ENCODE measurements at regions of chr4 and their contacts with region 1.

Region 1: DNA sequence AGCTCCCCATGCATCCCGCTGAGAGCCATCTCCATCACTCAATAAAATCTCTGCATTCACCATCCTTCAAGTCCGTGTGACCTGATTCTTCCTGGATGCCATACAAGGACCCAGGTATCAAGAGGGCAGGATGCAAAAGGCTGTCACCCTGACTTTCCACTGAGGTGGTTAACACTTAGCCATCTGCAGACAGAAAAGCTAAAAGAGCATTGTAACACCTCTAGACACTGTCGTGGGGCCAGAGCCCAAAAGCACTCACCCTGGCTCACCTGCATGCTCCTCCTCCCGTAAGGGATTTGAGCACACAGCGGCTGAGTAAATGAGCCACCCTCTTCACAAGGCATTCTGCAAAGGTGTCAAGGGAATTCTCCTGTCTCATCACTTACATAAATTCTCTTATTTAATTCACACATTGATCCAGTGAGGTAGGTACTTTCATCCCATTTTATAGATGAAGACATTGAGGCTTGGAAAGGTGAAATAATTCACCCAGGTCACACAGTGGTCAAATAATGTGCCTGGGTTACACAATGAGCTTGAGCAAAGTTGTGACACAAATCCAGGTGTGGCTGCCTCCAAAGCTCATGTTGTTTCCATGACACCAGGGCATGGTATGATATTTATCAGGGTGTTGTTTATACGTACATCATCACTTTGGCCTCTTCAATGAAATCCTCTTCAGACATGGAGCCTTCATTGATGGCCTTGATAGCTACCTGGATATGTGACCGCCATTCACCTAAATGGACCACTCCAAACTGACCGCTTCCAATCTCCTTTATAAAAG is 48.0 kb downstream of the TXK start:
- DNase-seq: no peak
- H3K4me3 ChIP-seq: no peak overlapping the region
- H3K4me3 Mint-ChIP-seq: no peak overlapping the region
- H3K27ac ChIP-seq: no peak overlapping the region
- H3K27ac Mint-ChIP-seq: peak overlapping the region in 2 of 7 donors; percentile 22 to 46
- H3K4me1 ChIP-seq: no peaks in the 10 kb centered on the region
- H3K4me1 Mint-ChIP-seq: peaks cover 5 to 19% (median 9%) of the 10 kb centered on the region in 4 donors
- H3K27me3 ChIP-seq: no peaks in the 10 kb centered on the region
- H3K27me3 Mint-ChIP-seq: no peaks in the 10 kb centered on the region

Region 2: GRCh38 chr4:47926639-47927258 is 159.3 kb before region 1 on chr4:
- CTCF ChIA-PET with region 1: interaction called, 5 read pairs
- POLR2A ChIA-PET with region 1: no interaction called
- intact Hi-C with region 1: loop called (anchors 1 kb)
- DNase-seq: peak in 4 of 5 donors; percentile 45 to 49 (median 47)
- H3K4me3 ChIP-seq: no peak overlapping the region
- H3K4me3 Mint-ChIP-seq: peak overlapping the region in 6 of 8 donors; percentile 15 to 69 (median 47)
- H3K27ac ChIP-seq: no peak overlapping the region
- H3K27ac Mint-ChIP-seq: no peak overlapping the region
- H3K4me1 ChIP-seq: peaks cover 7% of the 10 kb centered on the region
- H3K4me1 Mint-ChIP-seq: peaks cover 11 to 13% (median 12%) of the 10 kb centered on the region in 4 donors
- H3K27me3 ChIP-seq: no peaks in the 10 kb centered on the region
- H3K27me3 Mint-ChIP-seq: peaks cover 9 to 15% of the 10 kb centered on the region in 2 donors

Region 3: GRCh38 chr4:48008021-48008596 is 77.9 kb before region 1 on chr4:
- CTCF ChIA-PET with region 1: interaction called, 44 read pairs
- POLR2A ChIA-PET with region 1: no interaction called
- intact Hi-C with region 1: loop called (anchors 1 kb)
- DNase-seq: no peak
- H3K4me3 ChIP-seq: no peak overlapping the region
- H3K4me3 Mint-ChIP-seq: no peak overlapping the region
- H3K27ac ChIP-seq: no peak overlapping the region
- H3K27ac Mint-ChIP-seq: no peak overlapping the region
- H3K4me1 ChIP-seq: no peaks in the 10 kb centered on the region
- H3K4me1 Mint-ChIP-seq: peaks cover 0 to 2% (median 0%) of the 10 kb centered on the region in 4 donors
- H3K27me3 ChIP-seq: no peaks in the 10 kb centered on the region
- H3K27me3 Mint-ChIP-seq: peaks cover 1 to 8% of the 10 kb centered on the region in 2 donors

Region 4: GRCh38 chr4:48033825-48034413 is 52.1 kb before region 1 on chr4:
- CTCF ChIA-PET with region 1: interaction called, 135 read pairs
- POLR2A ChIA-PET with region 1: no interaction called
- intact Hi-C with region 1: loop called (anchors 1 kb)
- DNase-seq: peak; percentile 49 to 67 (median 58)
- H3K4me3 ChIP-seq: no peak overlapping the region
- H3K4me3 Mint-ChIP-seq: no peak overlapping the region
- H3K27ac ChIP-seq: no peak overlapping the region
- H3K27ac Mint-ChIP-seq: no peak overlapping the region
- H3K4me1 ChIP-seq: no peaks in the 10 kb centered on the region
- H3K4me1 Mint-ChIP-seq: peaks cover 2 to 12% (median 3%) of the 10 kb centered on the region in 4 donors
- H3K27me3 ChIP-seq: no peaks in the 10 kb centered on the region
- H3K27me3 Mint-ChIP-seq: no peaks in the 10 kb centered on the region

Region 5: GRCh38 chr4:48100256-48100655 is 14.2 kb after region 1 on chr4:
- CTCF ChIA-PET with region 1: interaction called, 29 read pairs
- POLR2A ChIA-PET with region 1: no interaction called
- intact Hi-C with region 1: no loop called
- DNase-seq: no peak
- H3K4me3 ChIP-seq: no peak overlapping the region
- H3K4me3 Mint-ChIP-seq: no peak overlapping the region
- H3K27ac ChIP-seq: no peak overlapping the region
- H3K27ac Mint-ChIP-seq: peak overlapping the region in 1 of 7 donors; percentile 22
- H3K4me1 ChIP-seq: no peaks in the 10 kb centered on the region
- H3K4me1 Mint-ChIP-seq: peaks cover 2 to 14% (median 5%) of the 10 kb centered on the region in 4 donors
- H3K27me3 ChIP-seq: no peaks in the 10 kb centered on the region
- H3K27me3 Mint-ChIP-seq: no peaks in the 10 kb centered on the region